CD4-positive, alpha-beta memory T cell (primary cell): ENCODE measurements at regions of chr3 and their contacts with region 1.

Region 1: GRCh38 chr3:151210676-151211381 is 7.8 kb upstream of the GPR171 start:
- DNase-seq: no peak
- H3K4me3 ChIP-seq: no peak overlapping the region
- H3K4me3 Mint-ChIP-seq: peak overlapping the region in 5 of 8 donors; percentile 3 to 35 (median 32)
- H3K27ac ChIP-seq: no peak overlapping the region
- H3K27ac Mint-ChIP-seq: peak overlapping the region; percentile 52 to 97 (median 72)
- H3K4me1 ChIP-seq: peaks cover 44% of the 10 kb centered on the region
- H3K4me1 Mint-ChIP-seq: peaks cover 31 to 55% (median 41%) of the 10 kb centered on the region in 4 donors
- H3K27me3 ChIP-seq: no peaks in the 10 kb centered on the region
- H3K27me3 Mint-ChIP-seq: no peaks in the 10 kb centered on the region

Region 2: DNA sequence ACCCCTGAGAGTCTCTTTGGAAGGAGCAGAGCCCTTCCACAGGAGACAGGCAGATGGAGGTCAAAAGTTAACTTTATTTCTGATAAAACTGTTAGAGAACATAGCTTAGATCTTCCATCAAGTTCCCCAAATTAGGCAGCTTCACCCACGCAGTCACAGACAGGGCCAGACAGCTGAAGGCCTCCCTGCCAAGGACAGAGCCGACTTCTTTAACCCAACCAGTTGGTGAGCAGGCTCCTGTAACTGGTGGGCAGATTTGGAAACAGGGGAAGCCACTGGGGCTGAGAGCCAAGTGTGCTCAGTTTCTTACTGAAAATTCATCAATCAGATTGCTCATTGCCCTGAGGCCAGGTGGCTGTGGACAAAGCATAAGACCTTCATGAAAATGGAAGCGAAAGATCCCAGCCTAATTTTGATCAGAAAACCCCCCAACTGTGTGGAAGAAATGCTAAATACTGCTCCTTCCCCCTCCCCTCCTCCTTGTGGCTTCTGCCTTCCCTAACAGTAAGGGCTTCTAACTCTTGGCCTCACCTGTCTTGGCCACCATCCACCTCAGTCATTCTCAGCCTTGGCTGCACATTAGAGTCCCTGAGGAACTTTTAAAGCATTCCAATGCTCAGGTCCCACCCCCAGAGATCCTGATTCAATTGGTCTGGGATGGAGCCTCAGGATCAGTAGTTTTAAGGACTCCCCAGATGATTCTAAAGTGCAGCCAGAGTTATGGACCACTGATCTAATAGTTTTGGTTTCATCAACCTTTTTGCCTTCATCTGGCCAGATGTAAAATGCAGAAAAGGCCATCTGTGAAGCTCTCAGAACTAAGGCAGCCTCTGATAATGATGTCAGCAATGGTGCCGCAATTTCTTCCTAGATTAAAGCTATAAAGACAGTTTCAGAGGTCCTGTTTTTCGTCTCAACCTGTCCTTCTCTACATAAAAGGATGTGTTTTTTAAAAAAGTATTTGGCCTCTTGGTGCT is 249.8 kb before region 1 on chr3:
- CTCF ChIA-PET with region 1: no interaction called
- POLR2A ChIA-PET with region 1: no interaction called
- intact Hi-C with region 1: no loop called
- DNase-seq: no peak
- H3K4me3 ChIP-seq: no peak overlapping the region
- H3K4me3 Mint-ChIP-seq: no peak overlapping the region
- H3K27ac ChIP-seq: no peak overlapping the region
- H3K27ac Mint-ChIP-seq: no peak overlapping the region
- H3K4me1 ChIP-seq: no peaks in the 10 kb centered on the region
- H3K4me1 Mint-ChIP-seq: no peaks in the 10 kb centered on the region
- H3K27me3 ChIP-seq: no peaks in the 10 kb centered on the region
- H3K27me3 Mint-ChIP-seq: peaks cover 31 to 33% of the 10 kb centered on the region in 2 donors

Region 3: GRCh38 chr3:151146071-151146730 is 64.6 kb before region 1 on chr3:
- CTCF ChIA-PET with region 1: no interaction called
- POLR2A ChIA-PET with region 1: no interaction called
- intact Hi-C with region 1: no loop called
- DNase-seq: peak; percentile 44 to 52 (median 46)
- H3K4me3 ChIP-seq: no peak overlapping the region
- H3K4me3 Mint-ChIP-seq: no peak overlapping the region
- H3K27ac ChIP-seq: no peak overlapping the region
- H3K27ac Mint-ChIP-seq: peak overlapping the region in 1 of 7 donors; percentile 39
- H3K4me1 ChIP-seq: no peaks in the 10 kb centered on the region
- H3K4me1 Mint-ChIP-seq: no peaks in the 10 kb centered on the region
- H3K27me3 ChIP-seq: no peaks in the 10 kb centered on the region
- H3K27me3 Mint-ChIP-seq: peaks cover 12 to 13% of the 10 kb centered on the region in 2 donors

Region 4: DNA sequence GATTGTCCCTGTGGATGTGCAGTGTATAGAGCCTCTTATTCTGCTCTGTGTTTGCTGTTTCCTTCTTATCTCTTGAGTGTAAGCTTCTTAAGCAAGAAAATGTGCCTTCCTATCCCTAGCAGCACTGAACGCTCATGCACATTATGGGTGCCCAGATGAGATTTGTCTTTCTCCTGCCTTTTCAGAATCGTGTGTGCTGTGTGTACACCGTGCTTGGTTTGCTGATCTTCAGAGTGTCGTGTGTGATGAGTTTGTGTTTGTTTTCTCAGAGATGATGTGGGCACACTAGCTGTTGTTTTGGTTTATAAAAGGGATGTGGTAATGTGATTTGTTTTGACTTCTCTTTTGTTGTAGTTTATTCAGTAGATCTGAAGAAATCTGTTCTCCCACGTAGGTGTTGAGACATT is 27.6 kb before region 1 on chr3:
- CTCF ChIA-PET with region 1: interaction called, 5 read pairs
- POLR2A ChIA-PET with region 1: interaction called, 118 read pairs
- intact Hi-C with region 1: loop called (anchors 1 kb)
- DNase-seq: peak; percentile 32 to 61 (median 40)
- H3K4me3 ChIP-seq: peak overlapping the region in 1 of 2 donors; percentile 33
- H3K4me3 Mint-ChIP-seq: peak overlapping the region; percentile 27 to 84 (median 76)
- H3K27ac ChIP-seq: no peak overlapping the region
- H3K27ac Mint-ChIP-seq: peak overlapping the region; percentile 1 to 94 (median 91)
- H3K4me1 ChIP-seq: peaks cover 27% of the 10 kb centered on the region
- H3K4me1 Mint-ChIP-seq: peaks cover 23 to 32% (median 25%) of the 10 kb centered on the region in 4 donors
- H3K27me3 ChIP-seq: no peaks in the 10 kb centered on the region
- H3K27me3 Mint-ChIP-seq: no peaks in the 10 kb centered on the region

Region 5: DNA sequence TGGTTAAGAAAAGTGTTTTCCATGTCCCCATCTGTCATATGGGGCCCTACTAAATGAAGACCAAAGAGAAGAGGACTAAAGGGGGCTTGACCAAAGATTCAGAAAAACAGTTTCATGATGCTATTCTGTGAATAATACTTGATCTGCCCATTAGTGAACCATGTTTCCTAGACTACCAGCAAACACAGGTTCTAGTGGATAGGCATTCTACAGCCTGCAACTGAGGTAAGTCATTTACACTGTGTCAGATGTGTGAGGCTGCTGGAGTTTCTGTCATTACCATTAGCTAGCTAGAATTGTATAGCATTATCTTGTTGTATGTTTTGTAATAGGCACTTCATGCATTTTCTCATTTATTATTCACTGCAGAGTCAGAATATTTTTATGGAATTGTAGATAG is 14.4 kb before region 1 on chr3:
- CTCF ChIA-PET with region 1: interaction called, 12 read pairs
- POLR2A ChIA-PET with region 1: interaction called, 24 read pairs
- intact Hi-C with region 1: no loop called
- DNase-seq: no peak
- H3K4me3 ChIP-seq: no peak overlapping the region
- H3K4me3 Mint-ChIP-seq: peak overlapping the region in 1 of 8 donors; percentile 26
- H3K27ac ChIP-seq: no peak overlapping the region
- H3K27ac Mint-ChIP-seq: peak overlapping the region in 2 of 7 donors; percentile 2 to 7
- H3K4me1 ChIP-seq: peaks cover 42% of the 10 kb centered on the region
- H3K4me1 Mint-ChIP-seq: peaks cover 18 to 42% (median 28%) of the 10 kb centered on the region in 4 donors
- H3K27me3 ChIP-seq: no peaks in the 10 kb centered on the region
- H3K27me3 Mint-ChIP-seq: no peaks in the 10 kb centered on the region

Region 6: GRCh38 chr3:151265866-151266265 is 55.0 kb after region 1 on chr3:
- CTCF ChIA-PET with region 1: interaction called, 10 read pairs
- POLR2A ChIA-PET with region 1: no interaction called
- intact Hi-C with region 1: no loop called
- DNase-seq: no peak
- H3K4me3 ChIP-seq: no peak overlapping the region
- H3K4me3 Mint-ChIP-seq: no peak overlapping the region
- H3K27ac ChIP-seq: no peak overlapping the region
- H3K27ac Mint-ChIP-seq: no peak overlapping the region
- H3K4me1 ChIP-seq: peaks cover 10% of the 10 kb centered on the region
- H3K4me1 Mint-ChIP-seq: peaks cover 10 to 25% (median 13%) of the 10 kb centered on the region in 4 donors
- H3K27me3 ChIP-seq: no peaks in the 10 kb centered on the region
- H3K27me3 Mint-ChIP-seq: peaks cover 0 to 1% of the 10 kb centered on the region in 2 donors